ENCODE measurements at regions of chr1 and their contacts with region 1.

Region 1: GRCh38 chr1:26417111-26417759 is 6.6 kb downstream of the LIN28A start:
- DNase-seq: peak; percentile 95
- ATAC-seq: peak; percentile 64
- H3K4me3 Mint-ChIP-seq: peak overlapping the region; percentile 61
- H3K27ac Mint-ChIP-seq: peak overlapping the region; percentile 100
- H3K4me1 Mint-ChIP-seq: peaks cover 91% of the 10 kb centered on the region
- H3K27me3 Mint-ChIP-seq: no peaks in the 10 kb centered on the region
- CTCF ChIP-seq: peak; percentile 92

Region 2: DNA sequence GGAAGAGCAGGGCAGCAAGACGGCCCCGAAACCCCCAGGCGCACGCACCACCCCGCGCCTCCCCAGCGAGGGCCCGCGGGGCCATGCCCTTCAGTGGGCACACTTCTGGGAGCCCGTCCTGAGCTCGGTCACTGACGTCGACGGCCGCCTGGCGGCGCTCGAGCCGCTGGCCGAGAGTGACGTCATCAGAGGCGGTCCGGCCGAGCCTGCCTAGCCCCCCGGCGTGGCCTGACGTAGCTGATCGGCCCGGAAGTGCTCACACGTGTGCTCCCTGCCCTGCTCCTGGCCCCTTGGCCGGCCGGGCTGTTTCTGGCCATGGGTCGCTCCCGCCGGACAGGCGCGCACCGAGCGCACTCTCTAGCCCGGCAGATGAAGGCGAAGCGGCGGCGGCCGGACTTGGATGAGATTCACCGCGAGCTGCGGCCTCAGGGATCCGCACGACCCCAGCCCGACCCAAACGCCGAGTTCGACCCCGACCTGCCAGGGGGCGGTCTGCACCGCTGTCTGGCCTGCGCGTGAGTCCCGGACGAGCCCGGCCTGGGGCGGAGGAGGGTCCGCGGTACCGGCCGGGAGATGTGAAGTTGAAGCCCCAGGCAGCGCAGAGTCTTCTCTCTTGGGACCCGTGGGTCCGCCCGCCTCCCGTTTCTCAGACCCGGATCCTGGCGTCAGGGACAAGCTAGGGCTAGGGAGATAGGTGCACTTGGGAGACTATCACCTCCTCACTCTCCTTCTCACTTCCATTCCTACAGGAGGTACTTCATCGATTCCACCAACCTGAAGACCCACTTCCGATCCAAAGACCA is 247.4 kb before region 1 on chr1 and contains the start of gene ZNF593:
- CTCF ChIA-PET with region 1: interaction called, 11 read pairs
- POLR2A ChIA-PET with region 1: no interaction called
- DNase-seq: peak; percentile 92
- ATAC-seq: peak; percentile 76
- H3K4me3 Mint-ChIP-seq: peak within 1 kb of the TSS; percentile 85
- H3K27ac Mint-ChIP-seq: peak within 1 kb of the TSS; percentile 65; the same call in 1 of the 2 replicates
- H3K4me1 Mint-ChIP-seq: peaks cover 31% of the 10 kb centered on the region
- H3K27me3 Mint-ChIP-seq: peaks cover 14% of the 10 kb centered on the region
- CTCF ChIP-seq: peak; percentile 81
- total RNA-seq, gene ZNF593: 39.6 to 49.1 TPM (median 43.3 TPM) in 3 replicates

Region 3: GRCh38 chr1:26279456-26280332 is 137.5 kb before region 1 on chr1 and contains the start of gene SH3BGRL3:
- CTCF ChIA-PET with region 1: interaction called, 85 read pairs
- POLR2A ChIA-PET with region 1: interaction called, 5 read pairs
- DNase-seq: peak; percentile 76
- ATAC-seq: peak; percentile 71
- H3K4me3 Mint-ChIP-seq: peak within 1 kb of the TSS; percentile 85
- H3K27ac Mint-ChIP-seq: peak within 1 kb of the TSS; percentile 78
- H3K4me1 Mint-ChIP-seq: peaks cover 40% of the 10 kb centered on the region
- H3K27me3 Mint-ChIP-seq: no peaks in the 10 kb centered on the region
- CTCF ChIP-seq: no peak
- total RNA-seq, gene SH3BGRL3: 70.8 to 92.9 TPM (median 92.3 TPM) in 3 replicates

Region 4: DNA sequence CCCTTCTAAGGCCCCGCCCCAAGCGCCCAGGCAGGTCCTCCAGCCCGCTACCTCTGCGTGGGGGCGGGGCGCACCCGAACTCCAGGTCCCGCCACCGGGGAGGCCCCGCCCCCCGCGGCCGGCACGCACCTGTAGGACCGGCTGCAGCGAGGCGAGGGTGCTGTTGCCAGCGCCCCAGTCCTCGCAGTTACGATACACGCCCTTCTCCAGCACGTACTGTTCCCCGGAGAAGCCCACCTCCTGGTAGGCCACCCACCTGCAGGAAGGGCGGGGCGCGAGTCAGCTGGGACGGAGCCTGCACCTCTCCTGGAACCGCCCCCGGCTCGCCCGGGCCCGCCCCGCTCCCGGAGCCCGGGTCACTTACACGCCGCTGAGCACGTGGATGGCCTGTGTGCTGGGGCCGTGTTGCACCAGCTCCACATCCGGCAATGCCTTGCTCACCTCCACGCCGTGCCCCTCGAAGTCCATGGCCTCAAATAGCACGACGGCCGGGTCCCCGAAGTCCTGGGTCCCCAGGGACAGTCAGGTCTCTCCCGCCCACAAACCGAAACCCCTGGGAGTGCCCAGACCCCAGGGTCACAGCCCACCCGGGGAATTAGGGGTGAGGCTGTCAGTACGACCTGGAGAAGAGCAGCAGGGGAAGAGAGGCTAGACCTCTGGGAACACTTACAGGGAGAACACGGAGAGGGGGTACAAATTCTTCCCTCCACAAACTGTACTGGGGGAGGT is 80.6 kb before region 1 on chr1:
- CTCF ChIA-PET with region 1: interaction called, 15 read pairs
- POLR2A ChIA-PET with region 1: no interaction called
- DNase-seq: peak; percentile 97
- ATAC-seq: peak; percentile 92
- H3K4me3 Mint-ChIP-seq: peak overlapping the region; percentile 96
- H3K27ac Mint-ChIP-seq: no peak overlapping the region
- H3K4me1 Mint-ChIP-seq: peaks cover 28% of the 10 kb centered on the region
- H3K27me3 Mint-ChIP-seq: peaks cover 8% of the 10 kb centered on the region
- CTCF ChIP-seq: no peak

Region 5: DNA sequence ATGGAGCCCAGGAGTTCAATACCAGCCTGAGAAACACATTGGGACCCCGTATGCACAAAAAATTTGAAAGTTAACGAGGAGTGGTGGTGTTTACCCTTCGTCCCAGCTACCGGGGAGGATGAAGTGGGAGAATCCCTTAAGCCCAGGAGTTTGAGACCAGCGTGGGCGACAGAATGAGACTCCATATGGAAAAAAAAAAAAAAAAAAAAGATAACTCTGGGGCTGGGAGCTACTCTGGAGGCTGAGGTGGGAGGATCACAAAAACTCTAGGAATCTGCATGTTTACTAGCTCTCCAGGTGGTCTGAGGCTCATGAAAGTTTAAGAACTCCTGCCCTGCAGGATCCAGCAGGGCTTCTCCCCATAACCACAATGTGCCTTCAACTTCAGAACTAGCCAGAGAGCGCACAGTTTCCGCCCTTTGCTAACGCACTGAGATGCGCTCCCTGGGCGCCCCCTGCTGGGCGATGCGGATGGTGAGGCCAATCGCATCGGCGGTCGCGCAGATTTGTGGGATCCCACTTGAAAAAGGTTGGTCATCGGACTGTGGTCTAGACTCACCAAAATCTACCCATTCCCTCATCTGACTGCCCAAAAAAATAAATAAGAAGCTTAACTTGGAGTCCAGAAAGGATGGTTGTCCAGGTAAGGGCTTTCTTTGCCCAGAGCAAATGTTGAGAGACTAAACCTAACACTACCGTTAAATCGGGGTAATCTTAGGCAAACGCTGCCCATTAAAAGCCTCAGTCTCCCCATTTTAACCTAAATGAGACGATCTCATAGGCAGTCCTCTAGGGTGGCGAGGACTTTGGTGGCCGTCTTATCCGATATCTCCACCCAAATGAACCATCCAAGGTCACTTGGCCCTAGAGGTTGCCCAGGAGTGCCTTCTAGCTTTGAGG is 53.4 kb before region 1 on chr1:
- CTCF ChIA-PET with region 1: interaction called, 20 read pairs
- POLR2A ChIA-PET with region 1: interaction called, 3 read pairs
- DNase-seq: peak; percentile 87
- ATAC-seq: peak; percentile 54
- H3K4me3 Mint-ChIP-seq: no peak overlapping the region
- H3K27ac Mint-ChIP-seq: no peak overlapping the region
- H3K4me1 Mint-ChIP-seq: peaks cover 26% of the 10 kb centered on the region
- H3K27me3 Mint-ChIP-seq: peaks cover 43% of the 10 kb centered on the region
- CTCF ChIP-seq: peak; percentile 79

Region 6: GRCh38 chr1:26399034-26399433 is 18.2 kb before region 1 on chr1:
- CTCF ChIA-PET with region 1: interaction called, 60 read pairs
- POLR2A ChIA-PET with region 1: interaction called, 3 read pairs
- DNase-seq: no peak
- ATAC-seq: no peak
- H3K4me3 Mint-ChIP-seq: no peak overlapping the region
- H3K27ac Mint-ChIP-seq: no peak overlapping the region
- H3K4me1 Mint-ChIP-seq: no peaks in the 10 kb centered on the region
- H3K27me3 Mint-ChIP-seq: no peaks in the 10 kb centered on the region
- CTCF ChIP-seq: no peak

Region 7: DNA sequence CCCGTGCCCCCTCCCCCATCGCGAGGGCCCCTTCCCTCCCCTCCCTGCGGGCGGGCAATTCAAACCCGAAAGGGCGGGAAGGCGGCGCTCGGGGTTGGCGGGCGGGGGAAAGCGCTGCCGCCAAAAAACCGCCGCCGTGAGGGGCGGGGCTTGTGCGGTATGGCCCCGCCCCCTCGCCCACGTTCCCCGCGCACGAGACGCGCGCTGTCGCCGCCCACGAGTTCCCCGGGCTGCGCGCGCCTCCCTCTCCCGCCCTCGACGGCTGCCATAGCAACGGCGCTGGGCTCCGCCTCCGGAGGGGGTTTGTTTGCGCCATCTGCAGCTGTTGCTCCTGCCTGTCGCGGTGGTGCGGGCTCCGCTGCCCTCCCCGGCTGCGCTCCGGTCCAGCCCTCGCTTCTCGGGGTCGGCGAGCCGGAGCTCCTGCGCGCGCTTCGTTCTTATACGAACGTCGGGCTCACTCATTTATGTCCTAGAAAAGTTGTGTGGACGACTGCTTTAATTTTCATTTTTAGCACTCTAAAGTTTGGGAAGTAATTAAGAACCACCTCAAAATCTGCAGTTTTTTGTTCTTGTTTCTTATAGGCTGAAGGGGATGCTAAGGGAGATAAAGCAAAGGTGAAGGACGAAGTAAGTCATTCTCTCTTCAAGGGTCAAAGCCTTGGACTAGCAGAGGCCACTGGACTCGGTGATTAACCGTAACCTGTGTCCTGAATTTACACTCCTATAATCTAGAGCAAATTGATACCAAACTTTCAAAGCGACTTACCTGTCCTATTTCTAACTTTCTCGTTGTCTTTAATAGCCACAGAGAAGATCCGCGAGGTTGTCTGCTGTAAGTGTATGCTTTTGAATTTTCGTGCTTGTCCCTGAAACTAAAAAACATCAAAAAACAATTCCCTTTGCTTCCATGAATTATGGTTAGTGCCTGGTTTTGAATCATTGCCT is 55.9 kb after region 1 on chr1:
- CTCF ChIA-PET with region 1: interaction called, 33 read pairs
- POLR2A ChIA-PET with region 1: interaction called, 7 read pairs
- DNase-seq: peak; percentile 96
- ATAC-seq: peak; percentile 59
- H3K4me3 Mint-ChIP-seq: peak overlapping the region; percentile 89
- H3K27ac Mint-ChIP-seq: peak overlapping the region; percentile 86
- H3K4me1 Mint-ChIP-seq: peaks cover 31% of the 10 kb centered on the region
- H3K27me3 Mint-ChIP-seq: no peaks in the 10 kb centered on the region; the same call in 1 of the 2 replicates
- CTCF ChIP-seq: no peak

Measured in WTC11 (cell line).